ENCODE measurements at regions of chr14 and their contacts with region 1.

Region 1: GRCh38 chr14:103576371-103577024 is 13.7 kb downstream of the COA8 start:
- DNase-seq: peak; percentile 99
- H3K4me3 ChIP-seq: no peak overlapping the region
- H3K27ac ChIP-seq: peak overlapping the region; percentile 83 to 92 (median 89)
- H3K4me1 ChIP-seq: peaks cover 13 to 48% of the 10 kb centered on the region in 2 donors
- H3K27me3 ChIP-seq: no peaks in the 10 kb centered on the region
- CTCF ChIP-seq: no peak
- POLR2A ChIP-seq: peak in 1 of 2 donors; percentile 39

Region 2: DNA sequence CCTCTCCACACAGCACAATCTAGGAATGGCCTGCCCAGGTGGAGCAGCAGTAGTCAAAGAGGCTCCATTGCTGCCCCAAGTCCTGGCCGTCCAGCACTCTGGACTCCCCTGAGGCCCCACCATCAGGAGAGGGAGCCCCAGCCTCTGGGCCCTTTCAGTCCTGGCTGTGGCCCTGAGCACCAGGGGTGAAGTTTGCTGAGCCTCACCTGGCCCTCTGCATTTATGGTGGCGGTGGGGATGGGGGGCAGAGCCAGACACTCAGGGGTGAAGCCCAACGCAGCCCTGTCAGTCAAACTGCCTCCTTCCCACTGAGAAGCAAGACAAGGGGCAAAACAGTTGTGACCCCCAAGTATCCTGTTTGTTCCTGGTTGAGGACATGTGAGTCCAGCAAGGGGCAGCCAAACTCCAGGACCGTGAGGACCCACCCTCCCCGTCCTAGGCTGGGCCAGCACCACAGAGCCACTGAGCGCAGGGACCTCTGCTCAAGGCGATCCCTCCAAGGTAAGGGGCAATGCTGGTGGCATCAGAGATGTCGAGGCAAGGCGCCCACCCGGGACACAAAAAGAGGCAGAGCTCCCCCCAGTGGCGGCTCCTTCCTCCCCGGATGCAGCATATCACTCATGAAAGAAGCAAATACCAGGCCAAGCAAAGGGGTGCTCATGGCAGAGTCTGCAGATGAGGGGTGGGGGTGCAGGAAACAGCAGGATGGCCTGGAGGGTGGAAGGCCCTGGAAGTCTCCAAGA is 658.9 kb before region 1 on chr14:
- intact Hi-C with region 1: no loop called
- DNase-seq: peak; percentile 62 to 65
- H3K4me3 ChIP-seq: no peak overlapping the region
- H3K27ac ChIP-seq: no peak overlapping the region
- H3K4me1 ChIP-seq: peaks cover 0 to under 1% of the 10 kb centered on the region in 2 donors
- H3K27me3 ChIP-seq: peaks cover 2% of the 10 kb centered on the region
- CTCF ChIP-seq: peak in 5 of 6 experiments; percentile 23 to 74 (median 63)
- POLR2A ChIP-seq: no peak

Region 3: GRCh38 chr14:103628684-103629502 is 52.4 kb after region 1 on chr14 and contains the start of gene KLC1:
- intact Hi-C with region 1: loop called (anchors 5 kb)
- DNase-seq: peak; percentile 81 to 82
- H3K4me3 ChIP-seq: peak within 1 kb of the TSS; percentile 38 to 88 (median 87)
- H3K27ac ChIP-seq: peak within 1 kb of the TSS; percentile 92 to 99 (median 99)
- H3K4me1 ChIP-seq: peaks cover 31 to 69% of the 10 kb centered on the region in 2 donors
- H3K27me3 ChIP-seq: no peaks in the 10 kb centered on the region
- CTCF ChIP-seq: peak in 1 of 6 experiments; percentile 11
- POLR2A ChIP-seq: peak in 1 of 2 donors; percentile 86
- total RNA-seq, gene KLC1: 236 to 340 (median 281) TPM

Region 4: DNA sequence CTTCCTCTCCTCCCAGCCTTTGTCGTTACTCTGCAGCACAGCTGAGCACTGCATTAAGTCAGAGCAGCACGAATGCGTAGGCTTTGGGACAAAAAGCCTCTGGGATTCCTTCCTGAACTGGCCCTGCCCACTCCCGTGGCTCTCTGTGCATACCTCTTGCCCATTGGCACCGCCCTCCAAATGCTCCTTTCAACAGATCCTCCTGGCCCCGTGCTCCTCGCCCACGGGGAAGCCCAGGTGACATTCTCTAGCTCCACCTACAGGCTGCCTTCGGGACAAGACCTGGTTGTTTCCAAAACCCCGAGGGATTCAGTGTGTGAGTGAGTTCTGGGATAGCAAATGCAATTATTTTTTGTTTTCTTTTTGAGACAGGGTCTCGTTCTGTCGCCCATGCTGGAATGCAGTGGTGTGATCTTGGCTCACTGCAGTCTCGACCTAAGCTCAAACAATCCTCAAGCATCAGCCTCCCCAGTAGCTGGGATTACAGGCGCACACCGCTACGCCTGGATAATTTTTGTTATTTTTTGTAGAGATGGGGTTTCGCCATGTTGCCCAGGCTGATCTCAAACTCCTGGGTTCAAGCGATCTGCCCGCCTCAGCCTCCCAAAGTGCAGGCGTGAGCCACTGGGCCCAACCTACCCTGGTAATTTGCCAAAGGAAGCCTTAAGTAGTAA is 333.9 kb after region 1 on chr14:
- intact Hi-C with region 1: loop called (anchors 10 kb)
- DNase-seq: peak; percentile 99
- H3K4me3 ChIP-seq: no peak overlapping the region
- H3K27ac ChIP-seq: peak overlapping the region; percentile 58 to 80 (median 78)
- H3K4me1 ChIP-seq: peaks cover 6 to 16% of the 10 kb centered on the region in 2 donors
- H3K27me3 ChIP-seq: no peaks in the 10 kb centered on the region
- CTCF ChIP-seq: peak; percentile 57 to 99 (median 90)
- POLR2A ChIP-seq: peak in 1 of 2 donors; percentile 61